Heart left ventricle (tissue), 16 donors: ENCODE measurements at regions of chr12 and their contacts with region 1.

Region 1: GRCh38 chr12:11171145-11171968 is at the start of gene SMIM10L1:
- DNase-seq: peak; percentile 94 to 96 (median 95)
- ATAC-seq: peak; percentile 99 to 100 (median 100)
- H3K4me3 ChIP-seq: peak within 1 kb of the TSS; percentile 44 to 97 (median 84)
- H3K27ac ChIP-seq: peak within 1 kb of the TSS; percentile 93 to 99 (median 98)
- H3K4me1 ChIP-seq: peaks cover 0 to 45% (median 34%) of the 10 kb centered on the region in 12 donors
- H3K27me3 ChIP-seq: no peaks in the 10 kb centered on the region
- CTCF ChIP-seq: peak in 1 of 12 donors; percentile 7
- POLR2A ChIP-seq: peak in 1 of 2 donors; percentile 71
- total RNA-seq, gene SMIM10L1: 13.0 to 24.5 (median 16.9) TPM

Region 2: GRCh38 chr12:10220398-10221077 is 950.8 kb before region 1 on chr12:
- intact Hi-C with region 1: loop called in 1 of 10 experiments (anchors 10 kb)
- DNase-seq: peak; percentile 65 to 83 (median 75)
- ATAC-seq: peak; percentile 93 to 97 (median 94)
- H3K4me3 ChIP-seq: peak overlapping the region in 1 of 12 donors; percentile 8
- H3K27ac ChIP-seq: peak overlapping the region; percentile 4 to 83 (median 68)
- H3K4me1 ChIP-seq: peaks cover 4 to 62% (median 39%) of the 10 kb centered on the region in 12 donors
- H3K27me3 ChIP-seq: no peaks in the 10 kb centered on the region
- CTCF ChIP-seq: no peak
- POLR2A ChIP-seq: peak in 1 of 2 donors; percentile 15

Region 3: DNA sequence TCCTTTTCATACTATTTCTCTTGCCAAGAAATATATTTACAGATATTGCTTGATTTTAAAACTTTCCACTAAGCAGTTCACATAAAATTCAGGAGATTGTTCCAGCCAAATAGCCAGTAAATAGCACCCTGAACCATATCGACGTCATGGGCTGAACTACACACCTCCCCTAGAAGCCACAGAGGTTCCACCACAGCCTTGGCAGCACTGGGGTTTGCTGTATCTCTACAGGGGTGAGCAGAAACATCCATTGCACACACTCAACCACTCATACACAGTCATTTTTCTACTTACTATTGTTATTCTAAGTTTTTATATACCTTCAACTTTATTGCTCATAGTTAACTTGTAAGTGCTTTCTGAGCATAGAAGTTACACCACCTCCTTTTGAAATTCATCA is 673.8 kb before region 1 on chr12:
- intact Hi-C with region 1: no loop called
- DNase-seq: no peak
- ATAC-seq: no peak
- H3K4me3 ChIP-seq: no peak overlapping the region
- H3K27ac ChIP-seq: no peak overlapping the region
- H3K4me1 ChIP-seq: no peaks in the 10 kb centered on the region
- H3K27me3 ChIP-seq: peaks cover 0 to 6% (median 0%) of the 10 kb centered on the region in 9 donors
- CTCF ChIP-seq: no peak
- POLR2A ChIP-seq: no peak